Brain microvascular endothelial cell (primary cell): ENCODE measurements at regions of chr4 and their contacts with region 1.

Region 1: DNA sequence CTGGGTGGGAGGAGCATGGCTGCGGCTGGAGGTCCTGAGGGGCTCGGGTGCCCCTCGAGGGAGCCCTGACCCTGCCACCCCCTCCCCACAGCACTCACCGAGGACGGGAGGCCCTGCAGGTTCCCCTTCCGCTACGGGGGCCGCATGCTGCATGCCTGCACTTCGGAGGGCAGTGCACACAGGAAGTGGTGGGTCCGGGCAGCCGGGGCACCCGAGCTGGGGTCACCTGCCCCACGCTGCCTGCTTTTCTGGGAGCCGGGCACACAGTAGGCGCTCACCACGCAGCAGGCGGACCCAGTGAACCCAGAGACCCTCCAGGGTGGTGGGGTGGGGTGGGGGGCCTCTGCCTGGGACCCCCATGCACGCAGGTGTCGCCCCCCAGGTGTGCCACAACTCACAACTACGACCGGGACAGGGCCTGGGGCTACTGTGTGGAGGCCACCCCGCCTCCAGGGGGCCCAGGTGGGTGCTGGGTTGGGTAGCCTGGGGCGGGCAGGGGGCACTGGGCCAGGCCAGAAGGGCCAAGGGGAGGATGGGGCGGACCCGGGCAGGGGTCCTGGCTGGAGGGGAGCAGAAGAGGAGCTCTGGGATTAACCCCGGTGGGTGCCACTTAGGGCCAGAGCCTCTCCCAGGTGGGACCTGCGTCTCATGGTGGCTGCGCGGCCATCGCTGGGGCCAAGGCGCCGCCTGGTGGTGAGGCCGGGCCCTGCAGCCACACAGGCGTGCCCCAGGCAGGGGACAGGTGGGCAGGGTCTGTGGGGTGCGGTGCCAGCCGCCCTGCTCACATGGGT is 1.4 kb downstream of the HGFAC start:
- DNase-seq: no peak
- H3K4me3 ChIP-seq: no peak overlapping the region
- H3K27ac ChIP-seq: no peak overlapping the region
- H3K27me3 ChIP-seq: no peaks in the 10 kb centered on the region
- CTCF ChIP-seq: peak; percentile 87

Region 2: DNA sequence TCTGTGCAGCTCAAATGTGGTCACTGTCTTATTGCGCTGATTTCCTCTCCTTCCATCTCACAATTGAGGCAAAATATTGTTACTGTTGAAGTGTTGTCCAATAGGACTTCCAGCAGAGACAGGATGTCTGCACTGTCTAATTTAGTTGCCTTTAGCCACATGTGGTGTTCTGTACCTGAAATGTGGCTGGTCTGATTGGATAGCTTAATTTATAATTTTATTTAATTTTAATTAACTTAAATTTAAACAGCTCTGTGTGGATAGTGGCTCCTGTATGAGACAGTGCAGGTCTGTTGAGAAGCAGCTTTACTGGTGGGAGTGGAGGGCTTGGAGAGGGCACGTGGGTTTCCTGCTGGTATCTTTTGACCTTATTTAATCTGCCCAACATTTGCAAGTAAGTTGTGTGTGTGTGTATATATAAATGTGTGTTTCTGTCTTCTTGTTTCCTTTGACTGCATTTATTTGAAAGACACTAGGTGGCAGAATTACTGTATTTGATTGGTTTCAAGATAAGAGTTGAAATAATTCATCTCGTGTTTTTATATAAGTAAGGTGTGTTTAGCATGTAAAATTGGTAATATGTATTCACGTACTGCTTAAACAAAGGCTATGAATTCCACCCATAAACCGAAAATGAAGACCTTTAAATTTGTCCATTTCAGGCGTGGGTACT is 249.5 kb before region 1 on chr4:
- in situ Hi-C with region 1: no loop called
- DNase-seq: no peak
- H3K4me3 ChIP-seq: no peak overlapping the region
- H3K27ac ChIP-seq: no peak overlapping the region
- H3K27me3 ChIP-seq: no peaks in the 10 kb centered on the region
- CTCF ChIP-seq: peak; percentile 15

Region 3: GRCh38 chr4:3346146-3346545 is 97.0 kb before region 1 on chr4:
- in situ Hi-C with region 1: loop called (anchors 5 kb)
- DNase-seq: peak; percentile 81
- H3K4me3 ChIP-seq: no peak overlapping the region
- H3K27ac ChIP-seq: no peak overlapping the region
- H3K27me3 ChIP-seq: no peaks in the 10 kb centered on the region
- CTCF ChIP-seq: peak; percentile 83